ENCODE measurements at regions of chr3 and their contacts with region 1.

Region 1: DNA sequence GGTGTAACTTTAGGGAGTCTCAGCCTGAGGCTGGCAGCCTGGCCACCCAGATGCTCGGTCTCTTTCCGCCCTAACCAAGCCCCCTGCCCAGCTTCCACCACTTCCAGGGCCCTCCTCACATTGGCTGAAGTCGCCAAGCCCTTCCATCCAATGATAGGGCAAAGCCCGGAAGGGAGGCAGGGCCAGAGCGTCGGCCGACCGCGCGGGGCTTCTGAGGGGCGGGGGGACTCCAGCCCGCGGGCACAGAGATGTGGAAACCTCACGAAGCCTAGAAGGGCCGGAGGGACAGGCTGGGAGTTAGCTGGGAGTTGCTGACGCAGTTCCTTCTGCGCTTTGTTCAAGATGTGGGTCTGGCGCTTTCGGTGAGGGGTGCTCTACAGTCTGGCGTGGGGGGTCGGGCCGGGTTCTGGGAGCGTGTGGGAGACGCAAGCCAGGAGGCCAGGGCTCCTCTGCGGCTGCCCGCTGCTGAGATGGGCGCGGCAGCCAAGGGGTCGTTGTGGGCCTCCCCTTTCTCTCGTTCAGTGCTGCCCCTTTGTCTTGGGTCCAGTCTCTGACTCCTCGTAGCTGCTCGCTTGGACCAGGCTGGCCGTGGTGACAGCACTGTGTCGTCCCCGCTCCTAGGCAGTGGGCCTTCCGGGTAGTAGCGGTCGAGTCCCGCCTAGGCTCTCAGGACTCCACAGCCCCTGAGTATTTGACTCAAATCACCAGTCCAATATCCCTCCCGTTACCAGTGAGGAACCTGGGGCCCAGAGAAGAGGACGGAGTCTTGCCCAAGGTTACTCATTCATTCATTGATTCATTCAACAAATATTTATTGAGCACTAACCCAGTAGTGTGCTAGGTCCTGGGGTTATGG is at the start of gene ZNF660:
- DNase-seq: peak; percentile 84
- H3K4me3 ChIP-seq: peak within 1 kb of the TSS; percentile 60 to 84 (median 72)
- H3K27ac ChIP-seq: peak within 1 kb of the TSS; percentile 72 to 81 (median 77)
- H3K4me1 ChIP-seq: peaks cover 0 to 17% (median 9%) of the 10 kb centered on the region in 4 donors
- H3K27me3 ChIP-seq: peaks cover 0 to 13% (median 0%) of the 10 kb centered on the region in 3 donors
- CTCF ChIP-seq: no peak
- EP300 ChIP-seq: no peak
- POLR2A ChIP-seq: peak; percentile 15 to 17
- total RNA-seq, gene ZNF660: 2.3 to 4.9 (median 3.3) TPM

Region 2: GRCh38 chr3:44612678-44613077 is 27.8 kb after region 1 on chr3:
- intact Hi-C with region 1: loop called (anchors 2 kb)
- DNase-seq: no peak
- H3K4me3 ChIP-seq: no peak overlapping the region
- H3K27ac ChIP-seq: no peak overlapping the region
- H3K4me1 ChIP-seq: no peaks in the 10 kb centered on the region
- H3K27me3 ChIP-seq: no peaks in the 10 kb centered on the region
- CTCF ChIP-seq: no peak
- EP300 ChIP-seq: no peak
- POLR2A ChIP-seq: no peak

Region 3: GRCh38 chr3:44642337-44642736 is 57.5 kb after region 1 on chr3:
- intact Hi-C with region 1: no loop called
- DNase-seq: no peak
- H3K4me3 ChIP-seq: no peak overlapping the region
- H3K27ac ChIP-seq: no peak overlapping the region
- H3K4me1 ChIP-seq: no peaks in the 10 kb centered on the region
- H3K27me3 ChIP-seq: no peaks in the 10 kb centered on the region
- CTCF ChIP-seq: no peak
- EP300 ChIP-seq: no peak
- POLR2A ChIP-seq: no peak

Region 4: DNA sequence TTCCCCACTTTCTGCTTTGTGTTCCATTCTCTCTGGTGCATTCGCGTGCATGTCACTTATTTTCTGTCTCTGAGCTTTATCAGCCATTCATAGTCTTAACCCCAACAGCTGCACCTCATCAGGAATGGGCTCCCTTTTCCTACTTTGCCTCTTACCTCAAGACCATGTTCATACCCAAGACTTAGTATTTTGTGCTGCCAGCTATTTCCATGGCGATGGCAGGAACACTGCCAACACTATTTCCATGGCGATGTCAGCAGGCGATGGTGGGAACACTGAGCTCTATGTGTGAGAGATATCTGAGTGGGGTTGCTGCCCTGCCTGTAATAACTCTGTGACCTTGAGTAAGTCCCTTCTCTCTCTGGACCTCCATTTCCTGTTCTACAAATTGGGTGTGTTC is 69.2 kb after region 1 on chr3:
- intact Hi-C with region 1: no loop called
- DNase-seq: no peak
- H3K4me3 ChIP-seq: no peak overlapping the region
- H3K27ac ChIP-seq: no peak overlapping the region
- H3K4me1 ChIP-seq: peaks cover 0 to 11% (median 4%) of the 10 kb centered on the region in 4 donors
- H3K27me3 ChIP-seq: no peaks in the 10 kb centered on the region
- CTCF ChIP-seq: no peak
- EP300 ChIP-seq: no peak
- POLR2A ChIP-seq: no peak

Region 5: DNA sequence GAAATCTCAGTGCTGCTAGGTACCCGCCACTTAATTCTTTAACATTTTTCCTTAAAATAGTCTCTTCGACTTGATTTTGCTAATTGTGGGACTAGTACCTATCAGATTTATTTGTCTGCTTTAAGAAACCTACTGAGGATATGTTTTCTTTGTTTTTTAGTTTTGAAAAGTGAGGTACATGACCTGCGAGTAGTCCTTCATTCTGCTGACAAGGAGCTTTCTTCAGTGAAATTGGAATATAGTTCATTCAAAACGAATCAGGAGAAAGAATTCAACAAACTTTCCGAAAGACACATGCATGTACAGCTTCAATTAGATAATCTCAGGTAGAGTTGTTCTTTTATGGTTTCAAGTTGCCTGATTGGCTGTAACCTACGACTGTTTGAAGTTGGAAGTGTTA is 229.9 kb after region 1 on chr3:
- intact Hi-C with region 1: no loop called
- DNase-seq: no peak
- H3K4me3 ChIP-seq: no peak overlapping the region
- H3K27ac ChIP-seq: no peak overlapping the region
- H3K4me1 ChIP-seq: no peaks in the 10 kb centered on the region
- H3K27me3 ChIP-seq: no peaks in the 10 kb centered on the region
- CTCF ChIP-seq: no peak
- EP300 ChIP-seq: no peak
- POLR2A ChIP-seq: no peak